ENCODE measurements at regions of chr9 and their contacts with region 1.

Region 1: GRCh38 chr9:87684627-87685219 is 41.2 kb upstream of the CTSL start:
- DNase-seq: no peak
- H3K4me3 ChIP-seq: no peak overlapping the region
- CTCF ChIP-seq: peak; percentile 64

Region 2: GRCh38 chr9:87643107-87643650 is 41.5 kb before region 1 on chr9:
- CTCF ChIA-PET with region 1: no interaction called
- POLR2A ChIA-PET with region 1: no interaction called
- DNase-seq: no peak
- H3K4me3 ChIP-seq: no peak overlapping the region
- CTCF ChIP-seq: no peak

Region 3: GRCh38 chr9:87662808-87663528 is 21.8 kb before region 1 on chr9:
- CTCF ChIA-PET with region 1: interaction called, 16 read pairs
- POLR2A ChIA-PET with region 1: no interaction called
- DNase-seq: no peak
- H3K4me3 ChIP-seq: no peak overlapping the region
- CTCF ChIP-seq: peak; percentile 93

Region 4: GRCh38 chr9:87713278-87713987 is 28.7 kb after region 1 on chr9:
- CTCF ChIA-PET with region 1: interaction called, 24 read pairs
- POLR2A ChIA-PET with region 1: no interaction called
- DNase-seq: peak; percentile 96
- H3K4me3 ChIP-seq: peak overlapping the region; percentile 45
- CTCF ChIP-seq: peak; percentile 13

Region 5: DNA sequence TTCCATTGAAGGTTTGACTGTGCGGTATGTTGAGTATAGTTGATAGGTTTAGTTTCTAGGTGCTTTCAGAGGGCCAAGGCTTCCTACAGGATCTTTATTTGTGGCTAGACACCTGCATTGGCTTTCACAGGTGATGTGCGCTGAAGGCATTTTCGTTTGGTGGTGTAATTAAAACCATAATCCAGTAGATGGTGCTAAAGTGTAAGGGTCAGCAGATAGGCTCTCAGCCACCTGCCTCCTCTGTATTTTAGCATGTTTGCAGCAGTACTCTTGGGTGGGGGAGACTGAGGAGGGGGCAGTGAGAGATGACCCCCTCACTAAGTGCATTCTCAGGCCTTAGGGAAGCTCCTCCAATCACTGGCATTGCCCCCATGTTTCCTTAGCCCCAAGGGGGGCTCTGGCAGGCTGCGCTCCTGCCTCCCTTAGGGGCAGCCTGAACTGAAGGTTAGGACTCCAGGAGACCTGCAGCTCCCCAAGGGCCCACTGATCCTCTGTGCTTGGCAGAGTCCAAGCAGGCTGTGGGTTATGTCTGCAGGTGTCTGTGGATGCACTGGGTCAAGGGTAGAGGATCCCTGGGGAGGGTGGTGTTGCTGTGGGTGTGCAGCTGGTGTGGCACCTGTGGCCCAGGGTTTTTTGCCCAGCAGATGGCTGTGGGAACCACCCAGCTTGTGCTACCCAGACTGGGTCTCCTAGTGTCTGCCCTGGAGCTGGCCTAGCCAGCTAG is 266.2 kb after region 1 on chr9:
- CTCF ChIA-PET with region 1: interaction called, 12 read pairs
- POLR2A ChIA-PET with region 1: no interaction called
- DNase-seq: no peak
- H3K4me3 ChIP-seq: no peak overlapping the region
- CTCF ChIP-seq: peak; percentile 30

Measured in AG04449 (cell line).